ENCODE measurements at regions of chr16 and their contacts with region 1.

Region 1: DNA sequence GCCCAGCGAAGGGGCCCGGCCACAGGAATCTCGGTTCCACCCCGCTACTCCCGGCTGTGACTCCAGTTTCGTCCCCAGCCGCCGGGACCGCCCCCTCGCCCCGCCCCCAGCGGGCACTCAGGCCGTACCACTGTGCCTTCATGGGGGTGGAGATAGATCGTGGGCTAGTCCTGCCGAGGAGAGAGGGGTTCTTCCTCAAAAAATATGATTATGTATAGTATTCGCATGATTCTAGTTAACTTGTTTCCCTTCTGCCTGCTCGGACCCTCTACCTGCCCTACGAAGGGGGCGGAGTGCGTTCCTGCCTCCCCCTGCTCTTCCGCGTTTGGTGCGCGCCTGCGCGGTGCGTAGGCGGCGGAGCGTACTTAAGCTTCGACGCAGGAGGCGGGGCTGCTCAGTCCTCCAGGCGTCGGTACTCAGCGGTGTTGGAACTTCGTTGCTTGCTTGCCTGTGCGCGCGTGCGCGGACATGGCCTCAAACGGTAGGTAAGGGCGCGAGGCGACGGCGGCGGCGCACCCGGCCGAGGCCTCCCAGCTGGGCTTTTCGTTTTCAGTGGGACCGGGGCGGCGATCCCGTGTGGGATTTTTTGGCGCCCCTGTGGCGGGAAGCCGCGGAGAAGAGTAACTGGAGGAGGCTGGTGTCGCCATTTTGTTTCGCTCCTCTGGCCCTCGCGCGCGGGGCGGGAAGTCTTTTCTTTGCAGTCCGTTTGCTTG is at the start of gene FUS:
- DNase-seq: peak; percentile 94 to 97
- H3K4me3 ChIP-seq: peak within 1 kb of the TSS; percentile 80 to 84 (median 82)
- H3K27ac ChIP-seq: peak within 1 kb of the TSS; percentile 93 to 97 (median 97)
- H3K4me1 ChIP-seq: peaks cover 23 to 50% (median 48%) of the 10 kb centered on the region in 4 donors
- H3K27me3 ChIP-seq: no peaks in the 10 kb centered on the region
- CTCF ChIP-seq: no peak
- EP300 ChIP-seq: no peak
- POLR2A ChIP-seq: peak in 2 of 4 donors; percentile 94 to 95
- total RNA-seq, gene FUS: 41.1 to 133 (median 60.3) TPM

Region 2: GRCh38 chr16:31458844-31459721 is 279.2 kb after region 1 on chr16 and contains the start of gene ARMC5:
- intact Hi-C with region 1: loop called (anchors 10 kb)
- DNase-seq: peak; percentile 97 to 99
- H3K4me3 ChIP-seq: peak within 1 kb of the TSS; percentile 68 to 89 (median 84)
- H3K27ac ChIP-seq: peak within 1 kb of the TSS; percentile 99 to 100 (median 100)
- H3K4me1 ChIP-seq: peaks cover 44 to 63% (median 52%) of the 10 kb centered on the region in 4 donors
- H3K27me3 ChIP-seq: no peaks in the 10 kb centered on the region
- CTCF ChIP-seq: peak in 5 of 7 experiments; percentile 21 to 75 (median 43)
- EP300 ChIP-seq: no peak
- POLR2A ChIP-seq: no peak
- total RNA-seq, gene ARMC5: 2.6 to 29.8 (median 15.1) TPM in 4 of 5 donors, not detected in the other

Measured in stomach (tissue), 19 donors.